Mammary epithelial cell (primary cell): ENCODE measurements at regions of chr22 and their contacts with region 1.

Region 1: DNA sequence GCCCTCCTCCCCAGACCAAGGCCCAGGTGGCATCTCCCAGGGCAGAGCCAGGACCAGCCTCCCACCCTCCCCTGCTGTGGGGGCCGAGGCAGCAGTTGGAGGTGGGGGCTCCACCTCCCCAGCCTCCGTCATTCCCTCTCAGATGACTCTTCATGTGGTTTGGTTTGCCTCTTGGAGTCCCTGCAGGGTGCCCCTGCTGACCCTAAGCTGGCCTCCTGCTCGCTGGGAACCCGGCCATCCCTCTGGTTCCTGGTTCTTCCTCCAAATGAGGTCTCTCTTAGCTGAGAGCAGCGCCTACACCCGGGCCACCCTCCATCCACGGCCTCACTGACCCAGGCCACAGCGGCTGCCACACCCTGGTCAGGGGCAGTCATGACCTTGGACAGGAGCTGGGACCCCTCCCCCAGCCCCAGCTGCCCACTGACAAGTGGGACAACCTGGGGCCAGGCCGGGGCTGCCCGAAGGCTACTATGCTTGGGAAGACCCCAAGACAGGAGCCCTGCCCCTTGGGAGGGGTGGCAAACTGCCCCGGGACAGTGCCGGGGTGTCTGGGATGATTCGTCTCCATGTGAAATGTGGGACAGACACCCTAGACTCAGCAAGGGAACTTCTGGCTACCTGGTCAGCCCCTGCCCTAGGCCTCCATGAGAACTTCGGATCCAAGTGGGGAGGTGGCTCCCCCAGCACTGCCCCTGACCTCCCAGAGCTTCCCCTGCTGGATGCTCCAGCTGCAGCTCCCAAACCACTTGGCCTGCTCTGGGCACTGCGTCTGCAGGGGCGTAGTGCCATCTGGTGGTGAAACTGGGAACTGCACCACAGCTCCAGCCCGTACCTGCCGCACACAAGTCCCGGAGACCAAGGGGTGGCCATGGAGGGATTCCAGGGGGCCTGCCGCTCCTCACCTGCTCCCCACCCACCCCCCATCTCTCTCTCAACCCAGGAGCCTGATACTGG is 194.5 kb downstream of the IGLL1 start:
- DNase-seq: peak; percentile 49
- H3K4me3 ChIP-seq: no peak overlapping the region
- H3K27ac ChIP-seq: no peak overlapping the region
- H3K4me1 ChIP-seq: no peaks in the 10 kb centered on the region
- H3K27me3 ChIP-seq: no peaks in the 10 kb centered on the region
- CTCF ChIP-seq: peak; percentile 96 to 98

Region 2: GRCh38 chr22:22981670-22982571 is 403.6 kb before region 1 on chr22:
- CTCF ChIA-PET with region 1: no interaction called
- dilution Hi-C with region 1: no loop called
- in situ Hi-C with region 1: no loop called
- intact Hi-C with region 1: no loop called
- DNase-seq: no peak
- H3K4me3 ChIP-seq: no peak overlapping the region
- H3K27ac ChIP-seq: no peak overlapping the region
- H3K4me1 ChIP-seq: no peaks in the 10 kb centered on the region
- H3K27me3 ChIP-seq: no peaks in the 10 kb centered on the region
- CTCF ChIP-seq: no peak

Region 3: DNA sequence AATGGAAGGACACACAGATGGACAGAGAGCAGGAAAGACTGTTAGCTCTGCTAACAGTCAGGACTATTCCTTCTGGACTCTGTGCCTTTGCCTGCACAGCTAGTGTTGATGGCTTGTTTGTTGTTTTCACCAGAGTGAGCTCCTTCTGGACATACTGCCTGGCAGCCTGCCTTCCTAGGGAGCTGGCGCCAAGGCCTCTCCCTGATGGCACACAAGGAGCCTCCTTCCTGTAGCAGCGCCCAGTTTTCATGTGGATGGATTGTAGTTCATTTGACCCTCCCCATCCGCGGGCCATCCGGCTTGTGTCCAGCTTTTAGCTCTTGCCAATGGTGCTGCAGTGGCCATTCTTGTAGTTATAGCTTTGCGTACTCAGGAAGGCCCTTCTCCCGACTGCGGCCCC is 221.9 kb before region 1 on chr22:
- CTCF ChIA-PET with region 1: no interaction called
- dilution Hi-C with region 1: loop called (anchors 25 kb)
- in situ Hi-C with region 1: no loop called
- intact Hi-C with region 1: no loop called
- DNase-seq: no peak
- H3K4me3 ChIP-seq: no peak overlapping the region
- H3K27ac ChIP-seq: no peak overlapping the region
- H3K4me1 ChIP-seq: no peaks in the 10 kb centered on the region
- H3K27me3 ChIP-seq: no peaks in the 10 kb centered on the region
- CTCF ChIP-seq: no peak

Region 4: GRCh38 chr22:23215294-23216241 is 170.0 kb before region 1 on chr22:
- CTCF ChIA-PET with region 1: no interaction called
- dilution Hi-C with region 1: no loop called
- in situ Hi-C with region 1: no loop called
- intact Hi-C with region 1: no loop called
- DNase-seq: peak; percentile 14
- H3K4me3 ChIP-seq: no peak overlapping the region
- H3K27ac ChIP-seq: no peak overlapping the region
- H3K4me1 ChIP-seq: peaks cover 34% of the 10 kb centered on the region
- H3K27me3 ChIP-seq: no peaks in the 10 kb centered on the region
- CTCF ChIP-seq: no peak

Region 5: DNA sequence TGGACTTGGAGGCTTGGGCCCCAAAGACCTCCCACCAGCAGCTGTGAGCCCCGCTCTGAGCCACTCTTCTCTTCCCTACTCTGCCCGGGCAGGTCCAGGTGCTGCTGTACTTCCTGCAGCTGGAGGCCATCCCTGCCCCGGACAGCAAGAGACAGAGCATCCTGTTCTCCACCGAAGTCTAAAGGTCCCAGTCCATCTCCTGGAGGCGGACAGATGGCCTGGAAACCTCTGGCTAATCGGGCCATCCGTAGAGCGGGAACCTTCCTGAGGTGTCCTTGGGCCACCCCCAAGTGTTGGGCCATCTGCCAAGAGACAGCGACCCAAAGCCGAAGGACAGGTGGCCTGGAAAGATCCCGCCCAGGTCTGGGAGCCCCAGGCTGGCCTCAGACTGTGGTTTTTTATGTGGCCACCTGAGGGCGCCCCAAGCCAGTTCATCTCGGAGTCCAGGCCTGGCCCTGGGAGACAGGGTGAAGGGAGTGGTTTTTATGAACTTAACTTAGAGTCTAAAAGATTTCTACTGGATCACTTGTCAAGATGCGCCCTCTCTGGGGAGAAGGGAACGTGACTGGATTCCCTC is 70.1 kb before region 1 on chr22:
- CTCF ChIA-PET with region 1: no interaction called
- dilution Hi-C with region 1: no loop called
- in situ Hi-C with region 1: no loop called
- intact Hi-C with region 1: loop called (anchors 5 kb)
- DNase-seq: peak; percentile 67
- H3K4me3 ChIP-seq: no peak overlapping the region
- H3K27ac ChIP-seq: no peak overlapping the region
- H3K4me1 ChIP-seq: peaks cover 4% of the 10 kb centered on the region
- H3K27me3 ChIP-seq: no peaks in the 10 kb centered on the region
- CTCF ChIP-seq: peak; percentile 21 to 51

Region 6: GRCh38 chr22:23424031-23424430 is 38.5 kb after region 1 on chr22:
- CTCF ChIA-PET with region 1: no interaction called
- dilution Hi-C with region 1: no loop called
- in situ Hi-C with region 1: no loop called
- intact Hi-C with region 1: no loop called
- DNase-seq: no peak
- H3K4me3 ChIP-seq: no peak overlapping the region
- H3K27ac ChIP-seq: no peak overlapping the region
- H3K4me1 ChIP-seq: no peaks in the 10 kb centered on the region
- H3K27me3 ChIP-seq: peaks cover 2% of the 10 kb centered on the region
- CTCF ChIP-seq: no peak

Region 7: DNA sequence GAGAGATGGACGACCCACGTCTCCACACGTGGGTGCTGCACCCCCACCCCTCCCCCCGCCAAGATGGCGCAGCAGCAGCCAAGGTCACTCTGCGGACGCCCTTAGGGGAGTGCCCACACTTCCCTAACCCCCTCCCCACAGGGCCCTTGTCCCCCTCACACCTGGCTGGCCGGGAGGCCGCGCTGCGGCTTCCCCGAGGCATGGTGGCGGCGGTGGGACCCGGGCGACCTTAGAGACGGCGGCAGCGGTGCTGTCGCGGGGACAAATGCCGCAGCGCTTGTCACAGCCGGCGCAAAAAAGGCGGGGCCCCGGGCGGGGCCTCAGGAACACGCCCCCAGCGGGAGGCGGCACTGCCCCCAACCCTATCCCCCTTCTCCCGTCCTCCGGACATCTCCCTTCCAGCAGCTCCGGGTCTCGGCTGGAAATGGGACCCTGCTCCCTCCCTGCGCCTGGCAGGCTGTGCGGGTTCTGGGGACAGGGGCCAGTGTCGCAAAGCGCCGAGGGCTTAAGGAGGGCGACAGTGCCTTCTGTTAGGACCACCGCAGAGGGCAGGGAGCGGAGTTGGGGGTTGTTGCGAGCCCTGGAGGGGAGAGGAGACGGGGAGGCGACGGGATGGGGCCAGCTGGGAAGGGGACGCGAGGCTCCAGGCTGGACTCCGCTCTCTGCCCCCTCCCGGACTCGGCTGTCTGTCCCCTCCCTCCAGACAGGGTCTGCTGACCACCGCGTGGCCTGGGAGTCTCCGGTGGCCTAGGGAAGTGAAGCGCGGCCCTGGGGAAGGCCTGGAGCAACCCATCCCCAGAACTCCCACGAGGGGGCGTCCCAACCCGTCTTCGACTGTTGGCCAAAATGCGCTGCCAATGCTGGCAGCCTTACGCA is 382.3 kb after region 1 on chr22 and contains the start of gene CHCHD10:
- CTCF ChIA-PET with region 1: no interaction called
- dilution Hi-C with region 1: no loop called
- in situ Hi-C with region 1: no loop called
- intact Hi-C with region 1: no loop called
- DNase-seq: no peak
- H3K4me3 ChIP-seq: peak within 1 kb of the TSS; percentile 67 to 87 (median 82)
- H3K27ac ChIP-seq: no peak within 1 kb of the TSS
- H3K4me1 ChIP-seq: peaks cover 20% of the 10 kb centered on the region
- H3K27me3 ChIP-seq: no peaks in the 10 kb centered on the region
- CTCF ChIP-seq: peak; percentile 56 to 84
- total RNA-seq, gene CHCHD10: 17.3 to 71.6 TPM